Endothelial cell of umbilical vein (primary cell): ENCODE measurements at regions of chr2 and their contacts with region 1.

Region 1: DNA sequence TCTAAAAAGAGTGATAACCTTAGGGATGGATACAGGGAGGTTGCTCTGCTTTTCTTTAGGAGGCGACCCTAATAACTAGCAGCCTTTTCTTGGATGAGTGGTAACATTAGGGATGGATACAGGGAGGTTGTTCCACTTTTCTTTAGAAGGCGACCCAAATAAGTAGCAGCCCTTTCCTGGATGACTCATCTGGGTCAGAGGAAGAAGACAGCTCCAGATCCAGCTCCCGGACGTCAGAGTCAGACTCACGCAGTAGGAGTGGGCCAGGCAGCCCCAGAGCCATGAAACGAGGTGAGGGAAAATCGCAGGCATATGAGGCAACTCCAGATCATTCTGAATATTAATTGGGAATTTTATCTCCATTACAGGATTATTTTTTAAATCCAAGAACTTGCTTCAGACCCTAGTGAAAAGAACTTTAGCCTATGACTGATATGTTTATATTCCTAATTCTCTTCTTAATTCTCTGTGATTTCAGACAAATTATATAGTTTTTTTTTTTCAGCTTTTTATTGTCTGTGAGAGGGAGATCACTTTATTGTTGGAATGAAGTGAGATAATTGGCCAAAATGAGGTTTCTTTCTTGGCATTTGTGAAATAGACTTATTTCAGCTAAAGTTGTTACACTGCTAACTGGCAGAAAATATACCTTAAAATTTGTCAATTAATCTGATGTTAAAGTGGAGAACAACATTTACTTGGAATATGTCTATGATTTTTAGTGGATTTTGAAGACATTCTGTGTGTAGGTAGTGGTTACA is 31.2 kb upstream of the C1GALT1C1L start:
- DNase-seq: peak; percentile 71
- H3K4me3 ChIP-seq: no peak overlapping the region
- H3K27ac ChIP-seq: no peak overlapping the region
- H3K4me1 ChIP-seq: peaks cover 9% of the 10 kb centered on the region
- H3K27me3 ChIP-seq: no peaks in the 10 kb centered on the region
- CTCF ChIP-seq: no peak
- POLR2A ChIP-seq: no peak

Region 2: GRCh38 chr2:43727634-43728014 is 20.2 kb after region 1 on chr2:
- CTCF ChIA-PET with region 1: no interaction called
- POLR2A ChIA-PET with region 1: no interaction called
- dilution Hi-C with region 1: no loop called
- intact Hi-C with region 1: loop called (anchors 2 kb)
- DNase-seq: no peak
- H3K4me3 ChIP-seq: no peak overlapping the region
- H3K27ac ChIP-seq: no peak overlapping the region
- H3K4me1 ChIP-seq: peaks cover 9% of the 10 kb centered on the region
- H3K27me3 ChIP-seq: no peaks in the 10 kb centered on the region
- CTCF ChIP-seq: no peak
- POLR2A ChIP-seq: no peak